Activated CD4-positive, alpha-beta memory T cell treated with anti-CD3 and anti-CD28 coated beads, Interleukin-2, amount 10 ng/mL, durations not matched to agents 7 days and 5 days (primary cell): ENCODE measurements at regions of chr1 and their contacts with region 1.

Region 1: GRCh38 chr1:65958561-65959350 is 166.1 kb downstream of the PDE4B start:
- DNase-seq: no peak
- H3K4me3 Mint-ChIP-seq: no peak overlapping the region
- H3K27ac Mint-ChIP-seq: no peak overlapping the region
- H3K4me1 Mint-ChIP-seq: peaks cover 10% of the 10 kb centered on the region
- H3K27me3 Mint-ChIP-seq: no peaks in the 10 kb centered on the region

Region 2: DNA sequence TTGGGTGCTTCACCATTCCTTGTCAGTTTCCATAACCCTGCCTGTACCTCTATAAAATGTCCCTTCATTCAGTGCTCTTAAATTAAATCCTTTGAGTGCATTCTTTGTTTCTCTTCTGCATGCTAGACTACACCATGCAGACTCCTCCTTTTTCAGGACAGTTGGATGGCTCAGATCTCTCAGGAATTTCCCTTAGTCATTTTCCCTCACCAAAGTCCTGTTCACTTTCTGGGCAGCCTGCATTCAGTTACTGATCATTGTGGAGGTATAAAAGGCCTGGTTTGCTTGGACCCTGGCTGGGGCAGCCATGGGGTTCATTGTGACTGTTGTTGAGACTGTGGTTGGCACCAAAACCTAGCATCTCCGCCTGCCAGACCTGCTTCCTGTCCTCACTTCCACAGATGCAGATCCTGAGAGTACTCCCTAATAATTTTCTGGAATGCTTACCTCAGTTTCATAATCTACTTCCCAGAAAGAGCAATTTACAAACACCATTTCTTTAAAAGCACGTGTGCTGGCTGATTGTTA is 77.6 kb before region 1 on chr1:
- CTCF ChIA-PET with region 1: no interaction called
- POLR2A ChIA-PET with region 1: no interaction called
- DNase-seq: no peak
- H3K4me3 Mint-ChIP-seq: no peak overlapping the region
- H3K27ac Mint-ChIP-seq: no peak overlapping the region
- H3K4me1 Mint-ChIP-seq: no peaks in the 10 kb centered on the region
- H3K27me3 Mint-ChIP-seq: peaks cover 5% of the 10 kb centered on the region

Region 3: GRCh38 chr1:66262211-66262963 is 303.6 kb after region 1 on chr1:
- CTCF ChIA-PET with region 1: no interaction called
- POLR2A ChIA-PET with region 1: no interaction called
- DNase-seq: no peak
- H3K4me3 Mint-ChIP-seq: no peak overlapping the region
- H3K27ac Mint-ChIP-seq: no peak overlapping the region
- H3K4me1 Mint-ChIP-seq: peaks cover 60% of the 10 kb centered on the region
- H3K27me3 Mint-ChIP-seq: no peaks in the 10 kb centered on the region

Region 4: GRCh38 chr1:66452162-66452561 is 493.4 kb after region 1 on chr1:
- CTCF ChIA-PET with region 1: interaction called, 23 read pairs
- POLR2A ChIA-PET with region 1: no interaction called
- DNase-seq: no peak
- H3K4me3 Mint-ChIP-seq: no peak overlapping the region
- H3K27ac Mint-ChIP-seq: no peak overlapping the region
- H3K4me1 Mint-ChIP-seq: no peaks in the 10 kb centered on the region
- H3K27me3 Mint-ChIP-seq: peaks cover 23% of the 10 kb centered on the region